ENCODE measurements at regions of chr15 and their contacts with region 1.

Region 1: GRCh38 chr15:68983961-68984481 is 30.5 kb upstream of the NOX5 start:
- DNase-seq: no peak
- H3K4me3 ChIP-seq: no peak overlapping the region
- CTCF ChIP-seq: no peak
- POLR2A ChIP-seq: no peak

Region 2: GRCh38 chr15:68997930-68998777 is 14.1 kb after region 1 on chr15:
- intact Hi-C with region 1: loop called (anchors 1 kb)
- DNase-seq: peak in 1 of 2 donors; percentile 17
- H3K4me3 ChIP-seq: no peak overlapping the region
- CTCF ChIP-seq: no peak
- POLR2A ChIP-seq: no peak

Region 3: GRCh38 chr15:69164807-69165636 is 181.0 kb after region 1 on chr15:
- intact Hi-C with region 1: no loop called
- DNase-seq: no peak
- H3K4me3 ChIP-seq: no peak overlapping the region
- CTCF ChIP-seq: no peak
- POLR2A ChIP-seq: no peak

Measured in lower leg skin (tissue), 4 donors.